ENCODE measurements at regions of chr19 and their contacts with region 1.

Region 1: DNA sequence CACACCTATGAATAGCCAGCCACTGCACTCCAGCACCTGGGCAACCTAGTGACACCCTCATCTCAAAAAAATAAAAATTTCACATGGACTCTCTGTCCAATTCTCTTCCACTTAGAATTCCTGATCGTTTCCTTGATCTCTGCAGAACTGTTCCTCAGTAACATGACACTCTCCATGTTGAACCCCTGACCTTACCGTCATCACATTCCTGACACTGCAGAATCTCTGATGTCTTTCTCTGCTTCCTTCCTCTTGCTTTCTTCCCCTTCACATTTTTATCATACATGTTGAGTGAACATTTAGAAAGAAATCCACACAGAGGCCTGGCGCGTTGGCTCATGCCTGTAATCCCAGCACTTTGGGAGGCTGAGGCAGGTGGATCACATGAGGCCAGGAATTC is 15.0 kb downstream of the ZNF114 start:
- DNase-seq: no peak
- ATAC-seq: no peak
- H3K4me3 Mint-ChIP-seq: no peak overlapping the region
- H3K27ac Mint-ChIP-seq: no peak overlapping the region
- H3K4me1 Mint-ChIP-seq: no peaks in the 10 kb centered on the region
- H3K27me3 Mint-ChIP-seq: peaks cover 9% of the 10 kb centered on the region

Region 2: DNA sequence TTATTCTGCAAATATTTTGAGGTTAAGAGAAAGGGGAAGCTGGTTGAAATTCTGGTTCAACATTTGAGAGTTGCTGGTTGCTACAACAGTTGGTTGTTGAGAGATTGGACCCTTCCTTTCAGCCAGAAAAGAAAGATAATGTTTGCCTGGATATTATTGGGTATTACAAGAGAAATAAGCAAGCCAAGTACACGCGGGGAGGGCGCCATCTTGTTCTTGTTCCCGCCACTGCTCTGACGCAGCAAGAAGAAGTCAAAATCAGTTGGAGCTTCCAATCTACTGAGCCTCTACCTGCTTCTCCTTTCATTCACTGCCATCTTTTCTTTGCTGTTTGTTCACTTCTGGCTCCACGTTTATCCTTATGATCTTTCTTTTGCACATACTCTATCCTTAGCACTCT is 311.4 kb before region 1 on chr19:
- CTCF ChIA-PET with region 1: no interaction called
- POLR2A ChIA-PET with region 1: no interaction called
- intact Hi-C with region 1: loop called in 1 of 2 experiments (anchors 5 kb)
- DNase-seq: no peak
- ATAC-seq: no peak
- H3K4me3 Mint-ChIP-seq: no peak overlapping the region
- H3K27ac Mint-ChIP-seq: no peak overlapping the region
- H3K4me1 Mint-ChIP-seq: no peaks in the 10 kb centered on the region
- H3K27me3 Mint-ChIP-seq: peaks cover 39% of the 10 kb centered on the region

Region 3: GRCh38 chr19:48340995-48341394 is 56.1 kb after region 1 on chr19:
- CTCF ChIA-PET with region 1: no interaction called
- POLR2A ChIA-PET with region 1: no interaction called
- intact Hi-C with region 1: no loop called
- DNase-seq: no peak
- ATAC-seq: no peak
- H3K4me3 Mint-ChIP-seq: no peak overlapping the region
- H3K27ac Mint-ChIP-seq: no peak overlapping the region
- H3K4me1 Mint-ChIP-seq: no peaks in the 10 kb centered on the region
- H3K27me3 Mint-ChIP-seq: no peaks in the 10 kb centered on the region